PC-9 (cell line): ENCODE measurements at regions of chr7 and their contacts with region 1.

Region 1: DNA sequence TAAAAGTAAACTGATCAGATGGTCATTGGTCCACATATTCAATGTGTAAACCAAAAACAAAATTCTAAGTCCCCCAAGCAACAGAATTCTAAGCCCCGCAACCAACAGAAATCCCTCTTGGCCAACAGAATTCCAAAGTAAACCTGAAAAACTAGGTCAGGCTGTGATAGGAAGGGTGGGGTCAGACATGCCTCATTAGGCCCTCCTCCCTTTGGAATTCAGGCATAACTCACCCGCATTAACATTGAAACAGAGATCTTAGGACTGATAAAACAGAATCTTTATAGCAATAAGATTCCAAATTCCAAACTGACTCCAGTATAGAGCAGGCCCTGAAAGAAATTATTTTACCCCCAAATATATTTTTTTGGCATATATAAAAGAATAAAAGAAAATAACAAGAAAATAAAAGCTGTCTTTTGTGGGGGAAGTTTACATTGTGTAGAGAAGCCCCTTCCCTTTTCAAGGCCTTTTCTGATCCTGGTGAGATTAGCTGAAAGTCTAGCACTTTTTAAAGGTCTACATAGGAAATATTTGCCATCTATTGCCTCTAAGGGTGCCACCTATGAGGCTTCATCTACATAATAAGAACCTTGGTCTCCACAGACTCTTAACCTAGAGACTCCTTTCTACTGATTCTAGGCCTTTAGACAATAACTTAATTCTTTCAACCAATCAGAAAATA is 30.5 kb downstream of the GNAT3 start:
- DNase-seq: peak; percentile 64 to 80
- H3K4me3 ChIP-seq: no peak overlapping the region
- H3K27ac ChIP-seq: peak overlapping the region; percentile 28; the same call in 1 of the 2 replicates
- H3K4me1 ChIP-seq: peaks cover 16% of the 10 kb centered on the region
- H3K27me3 ChIP-seq: no peaks in the 10 kb centered on the region
- CTCF ChIP-seq: no peak

Region 2: GRCh38 chr7:80499350-80499953 is 18.1 kb after region 1 on chr7:
- CTCF ChIA-PET with region 1: no interaction called
- POLR2A ChIA-PET with region 1: no interaction called
- intact Hi-C with region 1: loop called (anchors 2 kb)
- DNase-seq: peak; percentile 82 to 93
- H3K4me3 ChIP-seq: peak overlapping the region; percentile 1; the same call in 1 of the 2 replicates
- H3K27ac ChIP-seq: peak overlapping the region; percentile 69
- H3K4me1 ChIP-seq: peaks cover 25% of the 10 kb centered on the region
- H3K27me3 ChIP-seq: no peaks in the 10 kb centered on the region
- CTCF ChIP-seq: no peak

Region 3: DNA sequence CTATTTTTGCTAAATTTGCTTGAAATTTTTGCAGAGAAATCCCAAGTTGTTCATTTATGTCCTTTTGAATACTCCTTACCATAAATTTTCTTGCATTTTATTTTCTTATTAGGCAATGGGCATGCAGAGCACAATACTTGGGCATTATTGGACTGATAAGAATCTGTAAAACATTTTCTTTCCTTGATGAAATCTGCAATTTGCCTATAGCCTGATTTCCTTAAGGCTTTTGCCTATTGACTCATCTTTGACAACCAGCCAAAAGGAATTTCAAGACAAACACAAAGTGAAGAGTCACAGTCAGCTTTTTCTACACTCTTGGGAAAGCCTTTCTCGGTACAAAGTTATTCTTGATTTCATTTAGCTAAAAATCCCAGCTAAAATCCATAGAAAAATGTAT is 61.1 kb after region 1 on chr7:
- CTCF ChIA-PET with region 1: no interaction called
- POLR2A ChIA-PET with region 1: no interaction called
- intact Hi-C with region 1: loop called (anchors 5 kb)
- DNase-seq: peak; percentile 15 to 95
- H3K4me3 ChIP-seq: peak overlapping the region; percentile 20
- H3K27ac ChIP-seq: peak overlapping the region; percentile 74
- H3K4me1 ChIP-seq: peaks cover 17% of the 10 kb centered on the region
- H3K27me3 ChIP-seq: no peaks in the 10 kb centered on the region
- CTCF ChIP-seq: no peak

Region 4: DNA sequence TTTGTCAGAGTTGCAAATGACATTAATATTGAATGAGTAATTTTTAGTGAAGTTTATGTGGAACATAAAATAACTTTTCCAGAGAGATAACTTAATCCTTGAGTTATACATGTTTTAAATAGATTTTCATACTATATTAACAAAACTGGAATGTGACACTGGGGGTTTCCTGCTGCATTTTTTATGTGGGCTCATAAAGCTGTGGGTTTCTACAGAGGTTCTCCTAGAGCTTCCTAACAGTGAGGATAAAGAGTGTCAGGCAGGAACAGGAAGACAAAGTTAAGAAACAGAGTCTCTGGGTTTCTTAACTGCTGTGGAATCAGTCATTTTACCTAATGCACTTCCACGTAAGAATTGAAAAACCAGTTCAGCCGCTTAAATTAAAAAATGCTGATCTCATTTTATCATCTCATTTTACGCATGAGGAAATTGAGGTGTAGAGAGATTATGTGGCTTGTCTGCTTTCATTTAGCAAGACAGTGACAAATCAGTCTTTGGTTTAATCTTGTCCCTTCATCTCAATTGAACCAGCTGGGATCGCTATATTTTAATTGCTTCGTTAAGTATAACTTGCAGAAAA is 162.1 kb after region 1 on chr7:
- CTCF ChIA-PET with region 1: no interaction called
- POLR2A ChIA-PET with region 1: no interaction called
- intact Hi-C with region 1: loop called (anchors 1 kb)
- DNase-seq: peak; percentile 6 to 87
- H3K4me3 ChIP-seq: 0 out of 2 replicates have a peak overlapping the region, but pooled peaks have one; percentile 16
- H3K27ac ChIP-seq: peak overlapping the region; percentile 51
- H3K4me1 ChIP-seq: peaks cover 16% of the 10 kb centered on the region
- H3K27me3 ChIP-seq: no peaks in the 10 kb centered on the region
- CTCF ChIP-seq: no peak